Activated CD8-positive, alpha-beta memory T cell treated with anti-CD3 and anti-CD28 coated beads, Interleukin-2, amount 10 ng/mL, durations not matched to agents 7 days and 5 days (primary cell): ENCODE measurements at regions of chr4 and their contacts with region 1.

Region 1: GRCh38 chr4:102430461-102430910 is 70.7 kb upstream of the NFKB1 start:
- DNase-seq: no peak
- ATAC-seq: no peak
- H3K4me3 Mint-ChIP-seq: peak overlapping the region; percentile 85
- H3K27ac Mint-ChIP-seq: peak overlapping the region; percentile 88
- H3K4me1 Mint-ChIP-seq: peaks cover 15% of the 10 kb centered on the region
- H3K27me3 Mint-ChIP-seq: peaks cover 4% of the 10 kb centered on the region

Region 2: GRCh38 chr4:102263011-102263787 is 167.3 kb before region 1 on chr4:
- CTCF ChIA-PET with region 1: interaction called, 10 read pairs
- DNase-seq: peak; percentile 43
- ATAC-seq: peak; percentile 82
- H3K4me3 Mint-ChIP-seq: no peak overlapping the region
- H3K27ac Mint-ChIP-seq: no peak overlapping the region
- H3K4me1 Mint-ChIP-seq: peaks cover 11% of the 10 kb centered on the region
- H3K27me3 Mint-ChIP-seq: no peaks in the 10 kb centered on the region

Region 3: GRCh38 chr4:102344954-102345794 is 85.3 kb before region 1 on chr4 and contains the start of gene SLC39A8:
- CTCF ChIA-PET with region 1: interaction called, 28 read pairs
- DNase-seq: peak; percentile 93
- ATAC-seq: peak; percentile 85
- H3K4me3 Mint-ChIP-seq: peak within 1 kb of the TSS; percentile 84
- H3K27ac Mint-ChIP-seq: peak within 1 kb of the TSS; percentile 95
- H3K4me1 Mint-ChIP-seq: peaks cover 44% of the 10 kb centered on the region
- H3K27me3 Mint-ChIP-seq: no peaks in the 10 kb centered on the region
- total RNA-seq, gene SLC39A8: 60.3 to 66.2 TPM

Region 4: DNA sequence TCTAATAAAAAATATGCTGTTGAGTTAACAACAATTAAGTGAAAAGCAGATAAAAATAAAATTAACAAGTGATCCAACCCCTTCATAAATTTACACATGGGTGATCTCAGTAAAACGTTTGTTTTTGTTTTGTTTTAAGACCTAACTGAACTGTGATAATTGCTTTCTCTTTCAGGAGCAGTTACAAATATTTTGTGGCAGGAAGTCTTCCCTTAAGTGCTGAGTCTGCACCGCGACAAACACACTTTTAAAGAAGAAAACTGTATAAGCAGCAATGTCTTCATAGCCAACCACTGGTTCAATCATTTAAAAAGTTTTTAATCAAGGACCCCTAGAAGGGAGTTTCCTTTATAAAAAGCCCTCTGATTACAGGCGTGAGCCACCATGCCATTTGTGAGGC is 16.9 kb after region 1 on chr4:
- CTCF ChIA-PET with region 1: interaction called, 10 read pairs
- DNase-seq: peak; percentile 52
- ATAC-seq: peak; percentile 74
- H3K4me3 Mint-ChIP-seq: peak overlapping the region; percentile 7
- H3K27ac Mint-ChIP-seq: peak overlapping the region; percentile 64
- H3K4me1 Mint-ChIP-seq: peaks cover 33% of the 10 kb centered on the region
- H3K27me3 Mint-ChIP-seq: no peaks in the 10 kb centered on the region

Region 5: DNA sequence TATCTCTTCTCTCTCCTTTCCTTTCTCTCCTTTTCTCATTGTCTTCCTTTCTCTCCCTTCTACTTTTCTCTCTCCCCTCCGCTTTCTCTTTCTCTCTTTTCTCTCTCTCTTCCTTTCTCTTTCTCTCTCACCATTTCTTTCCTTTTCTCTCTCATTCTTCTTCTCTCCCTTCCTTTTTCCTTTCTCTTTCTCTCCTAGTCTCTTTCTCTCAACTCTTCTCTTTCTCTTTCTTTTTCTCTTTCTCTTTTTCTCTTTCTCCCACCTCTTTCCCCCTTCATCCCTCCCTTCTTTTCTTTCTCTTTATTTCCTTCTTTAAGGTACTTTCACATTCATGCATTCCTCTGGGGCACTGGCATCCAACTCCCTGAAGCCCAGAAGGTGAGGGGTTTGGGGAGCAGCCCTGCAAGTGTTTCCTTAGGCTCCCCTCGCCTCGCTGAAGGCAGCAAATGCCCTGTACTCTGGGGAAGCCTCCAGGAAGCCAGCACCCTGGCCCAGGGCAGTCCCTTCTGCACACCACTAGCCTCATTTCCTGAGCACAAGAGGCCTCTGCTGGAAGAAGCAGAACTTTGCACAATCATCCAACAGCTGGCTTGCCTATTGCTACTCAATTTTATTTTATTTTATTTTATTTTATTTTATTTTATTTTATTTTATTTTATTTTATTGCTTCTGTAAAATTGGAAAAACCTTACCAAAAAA is 194.9 kb after region 1 on chr4:
- CTCF ChIA-PET with region 1: interaction called, 27 read pairs
- DNase-seq: peak; percentile 87
- ATAC-seq: peak; percentile 100
- H3K4me3 Mint-ChIP-seq: peak overlapping the region; percentile 53
- H3K27ac Mint-ChIP-seq: peak overlapping the region; percentile 88
- H3K4me1 Mint-ChIP-seq: peaks cover 40% of the 10 kb centered on the region
- H3K27me3 Mint-ChIP-seq: no peaks in the 10 kb centered on the region

Region 6: DNA sequence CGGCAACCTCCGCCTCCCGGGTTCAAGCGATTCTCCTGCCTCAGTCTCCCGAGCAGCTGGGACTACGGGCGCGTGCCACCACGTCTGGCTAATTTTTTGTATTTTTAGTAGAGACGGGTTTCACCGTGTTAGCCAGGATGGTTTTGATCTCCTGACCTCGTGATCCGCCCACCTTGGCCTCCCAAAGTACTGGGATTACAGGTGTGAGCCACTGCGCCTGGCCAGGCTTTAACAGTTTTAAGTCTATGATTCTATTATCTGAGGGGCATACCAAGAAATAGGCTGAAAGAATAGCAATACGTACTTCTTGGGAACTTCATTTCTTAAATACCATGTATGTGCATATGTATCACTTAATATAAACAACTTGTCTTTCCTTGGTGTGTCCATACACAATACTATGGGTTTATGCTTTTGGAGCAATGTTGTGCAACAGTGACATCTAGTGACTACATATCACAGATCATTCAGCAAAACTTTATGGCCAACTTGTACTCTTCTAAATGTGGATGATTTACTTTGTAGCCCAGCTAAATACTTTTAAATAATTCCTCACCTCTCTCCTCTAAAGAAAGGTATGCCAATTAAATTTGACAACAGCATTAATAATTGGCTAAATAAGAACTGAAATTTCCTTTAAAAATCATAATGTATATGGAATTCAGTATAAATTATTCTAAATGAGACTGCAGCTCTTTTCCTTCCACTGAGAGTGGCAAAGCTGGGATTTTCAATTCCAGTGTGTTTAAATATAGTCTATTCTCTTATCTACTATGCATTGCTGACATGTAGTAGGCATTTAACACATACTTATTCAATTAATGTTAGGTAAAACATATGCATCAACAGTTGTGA is 578.6 kb after region 1 on chr4:
- CTCF ChIA-PET with region 1: interaction called, 12 read pairs
- DNase-seq: no peak
- ATAC-seq: peak; percentile 83
- H3K4me3 Mint-ChIP-seq: no peak overlapping the region
- H3K27ac Mint-ChIP-seq: no peak overlapping the region
- H3K4me1 Mint-ChIP-seq: no peaks in the 10 kb centered on the region
- H3K27me3 Mint-ChIP-seq: no peaks in the 10 kb centered on the region

Region 7: GRCh38 chr4:103099691-103100392 is 669.4 kb after region 1 on chr4 and contains the start of gene BDH2:
- CTCF ChIA-PET with region 1: interaction called, 11 read pairs
- DNase-seq: peak; percentile 63
- ATAC-seq: peak; percentile 99
- H3K4me3 Mint-ChIP-seq: peak within 1 kb of the TSS; percentile 86
- H3K27ac Mint-ChIP-seq: peak within 1 kb of the TSS; percentile 84
- H3K4me1 Mint-ChIP-seq: peaks cover 23% of the 10 kb centered on the region
- H3K27me3 Mint-ChIP-seq: no peaks in the 10 kb centered on the region
- total RNA-seq, gene BDH2: 16.5 to 19.2 TPM